Activated naive CD4-positive, alpha-beta T cell treated with anti-CD3 and anti-CD28 coated beads for 36 hours (primary cell): ENCODE measurements at regions of chr2 and their contacts with region 1.

Region 1: GRCh38 chr2:202033321-202034248 is at the start of gene FZD7:
- DNase-seq: peak; percentile 90
- H3K4me3 Mint-ChIP-seq: peak within 1 kb of the TSS; percentile 79
- H3K27ac Mint-ChIP-seq: no peak within 1 kb of the TSS
- H3K4me1 Mint-ChIP-seq: peaks cover 12% of the 10 kb centered on the region
- H3K27me3 Mint-ChIP-seq: peaks cover 18% of the 10 kb centered on the region
- total RNA-seq, gene FZD7: 0.17 to 0.43 TPM

Region 2: DNA sequence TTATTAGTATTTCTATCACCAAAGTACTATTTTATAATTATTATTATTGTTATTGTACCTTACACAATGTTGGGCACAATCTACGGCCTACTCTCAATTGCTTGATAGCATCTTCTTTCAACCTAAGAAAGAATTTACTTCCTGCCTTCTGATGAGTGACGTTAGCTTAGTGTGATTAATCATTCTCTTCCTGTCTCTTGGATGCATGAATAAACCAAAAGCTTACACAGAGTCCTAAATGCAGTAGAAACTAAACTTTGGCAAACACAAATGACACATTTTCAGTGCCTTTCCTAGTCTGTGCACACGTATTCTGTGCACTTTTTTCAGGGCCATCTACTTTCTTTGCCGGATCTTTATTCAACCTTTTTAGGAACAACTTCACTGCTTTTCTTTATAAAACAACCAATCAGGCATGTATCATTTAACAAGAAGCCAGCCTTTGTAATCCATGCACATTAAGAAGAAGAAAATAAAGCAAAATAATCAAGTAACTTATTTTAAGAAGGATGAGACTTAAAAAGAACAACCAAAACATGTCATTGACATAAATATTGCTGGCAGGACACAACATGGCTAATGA is 601.5 kb before region 1 on chr2:
- CTCF ChIA-PET with region 1: no interaction called
- intact Hi-C with region 1: loop called (anchors 5 kb)
- DNase-seq: no peak
- H3K4me3 Mint-ChIP-seq: peak overlapping the region; percentile 56
- H3K27ac Mint-ChIP-seq: peak overlapping the region; percentile 96
- H3K4me1 Mint-ChIP-seq: peaks cover 45% of the 10 kb centered on the region
- H3K27me3 Mint-ChIP-seq: no peaks in the 10 kb centered on the region

Region 3: DNA sequence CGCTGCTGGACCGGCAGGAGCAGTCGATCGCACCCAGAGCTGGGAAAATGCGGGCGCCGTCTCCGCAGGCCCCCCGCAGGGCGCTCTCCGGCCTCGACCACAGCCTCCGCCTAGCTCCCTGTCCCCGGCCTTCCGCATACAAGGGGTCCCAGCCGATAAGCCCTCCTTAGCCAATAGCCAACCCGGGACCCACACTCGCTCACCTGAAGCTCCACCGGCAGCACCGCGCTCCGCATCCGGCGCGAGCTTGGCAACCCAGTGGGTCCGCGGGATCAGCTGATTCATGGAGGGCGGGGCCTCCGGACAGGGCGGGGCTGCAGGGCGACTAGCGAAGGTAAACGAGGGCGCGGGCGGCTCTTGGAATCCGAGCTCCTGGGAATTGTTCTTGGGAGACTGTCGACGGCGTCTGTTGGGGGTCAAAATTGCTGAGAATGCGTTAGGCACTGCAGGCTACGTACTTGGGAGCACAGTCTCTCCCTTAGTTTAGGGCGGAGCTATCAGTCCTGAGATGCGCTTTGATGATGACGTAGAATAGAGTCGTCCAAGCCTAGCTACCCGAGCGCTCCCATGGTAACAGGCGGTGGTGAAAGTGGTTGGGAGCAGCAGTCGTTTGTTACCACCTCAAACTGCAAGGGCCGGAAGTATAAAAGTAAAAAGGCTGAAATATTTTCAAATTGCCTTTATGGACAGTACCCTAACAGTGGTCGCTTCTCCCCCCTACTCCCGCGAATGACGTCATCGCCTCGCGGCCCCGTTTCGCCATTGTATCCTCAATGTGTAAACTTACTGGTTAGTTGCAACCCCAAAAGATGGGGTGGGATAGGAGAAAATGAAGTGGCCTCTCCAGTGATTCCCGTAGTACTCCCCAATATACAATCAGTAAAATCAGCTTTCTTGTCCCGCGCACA is 252.7 kb before region 1 on chr2 and contains the start of gene ALS2:
- CTCF ChIA-PET with region 1: no interaction called
- intact Hi-C with region 1: loop called (anchors 1 kb)
- DNase-seq: peak; percentile 96
- H3K4me3 Mint-ChIP-seq: peak within 1 kb of the TSS; percentile 86
- H3K27ac Mint-ChIP-seq: peak within 1 kb of the TSS; percentile 83
- H3K4me1 Mint-ChIP-seq: peaks cover 13% of the 10 kb centered on the region
- H3K27me3 Mint-ChIP-seq: peaks cover 3% of the 10 kb centered on the region
- total RNA-seq, gene ALS2: 9.4 to 11.2 TPM

Region 4: DNA sequence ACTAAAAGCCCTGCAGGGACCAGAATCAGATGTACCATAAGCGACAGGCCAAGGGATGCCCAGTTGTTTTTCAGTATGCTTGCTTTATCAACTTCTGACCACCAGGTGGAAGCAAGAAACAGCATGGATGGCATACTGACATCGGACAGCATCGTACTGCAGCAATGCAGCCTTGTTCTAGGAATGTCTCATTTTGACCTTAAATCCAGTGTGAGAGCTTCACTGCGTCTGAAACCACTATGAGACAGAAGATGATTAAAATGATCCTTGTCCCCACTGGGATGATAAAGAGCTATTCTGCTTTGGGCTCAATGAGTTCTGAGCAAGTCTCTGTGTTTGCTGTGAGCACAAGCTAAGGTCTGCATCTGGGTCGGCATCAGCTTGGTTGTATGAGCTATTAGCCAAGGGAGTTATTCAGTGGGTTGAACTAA is 172.9 kb before region 1 on chr2:
- CTCF ChIA-PET with region 1: no interaction called
- intact Hi-C with region 1: loop called (anchors 2 kb)
- DNase-seq: peak; percentile 63
- H3K4me3 Mint-ChIP-seq: no peak overlapping the region
- H3K27ac Mint-ChIP-seq: no peak overlapping the region
- H3K4me1 Mint-ChIP-seq: peaks cover 17% of the 10 kb centered on the region
- H3K27me3 Mint-ChIP-seq: peaks cover 10% of the 10 kb centered on the region

Region 5: DNA sequence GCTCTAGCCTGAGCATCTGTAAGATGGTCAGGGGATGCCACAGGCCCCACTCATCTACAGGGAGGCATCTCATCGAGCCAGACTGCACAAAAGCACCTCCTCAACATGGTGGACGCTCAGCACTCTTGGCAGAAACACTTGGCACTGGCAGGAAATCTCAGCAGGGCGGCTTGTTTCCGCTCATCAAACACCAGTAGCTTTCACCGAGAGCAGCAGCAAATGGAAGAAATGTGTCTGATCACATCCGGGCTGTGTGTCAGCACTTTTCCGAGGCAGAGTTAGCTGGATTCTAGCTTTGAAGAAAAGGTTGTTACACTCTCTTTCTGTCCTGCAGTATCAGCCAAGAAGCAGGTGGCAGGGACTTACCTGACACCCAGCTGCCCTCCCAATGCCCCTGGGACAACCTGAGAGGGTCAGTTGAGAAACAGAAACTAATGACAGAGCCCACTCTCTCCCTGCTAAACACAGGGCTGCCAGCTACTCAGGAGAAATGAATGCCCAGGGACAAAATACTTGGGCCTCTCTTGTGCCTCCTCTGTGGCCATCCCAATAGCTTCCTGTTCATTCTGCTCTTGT is 68.9 kb before region 1 on chr2:
- CTCF ChIA-PET with region 1: no interaction called
- intact Hi-C with region 1: loop called (anchors 2 kb)
- DNase-seq: peak; percentile 53
- H3K4me3 Mint-ChIP-seq: no peak overlapping the region
- H3K27ac Mint-ChIP-seq: peak overlapping the region; percentile 74
- H3K4me1 Mint-ChIP-seq: no peaks in the 10 kb centered on the region
- H3K27me3 Mint-ChIP-seq: no peaks in the 10 kb centered on the region